Psoas muscle (tissue), 8 donors: ENCODE measurements at regions of chr3 and their contacts with region 1.

Region 1: DNA sequence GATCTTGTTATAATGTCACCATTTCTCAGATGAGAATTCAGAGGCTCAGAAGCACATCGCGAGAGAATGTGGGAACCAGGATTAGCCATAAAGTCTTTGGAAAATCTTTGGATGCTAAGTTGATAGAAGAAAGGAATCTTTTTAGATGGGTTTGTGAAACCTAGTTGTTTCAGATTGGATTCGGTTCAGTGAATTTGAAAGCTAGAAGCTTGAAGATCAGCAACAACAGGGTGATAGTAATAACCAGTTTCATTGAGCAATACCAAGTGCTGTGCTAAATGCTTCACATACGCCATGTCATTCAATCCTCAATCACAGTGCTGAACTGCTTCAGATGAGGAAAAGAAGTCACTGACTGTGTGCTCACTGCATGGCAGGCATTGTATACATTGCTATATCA is 47.4 kb upstream of the MITF start:
- DNase-seq: no peak
- ATAC-seq: peak; percentile 82 to 90 (median 86)
- H3K4me3 ChIP-seq: peak overlapping the region; percentile 55
- H3K27ac ChIP-seq: peak overlapping the region; percentile 66
- H3K4me1 ChIP-seq: peaks cover 26% of the 10 kb centered on the region
- H3K27me3 ChIP-seq: no peaks in the 10 kb centered on the region
- CTCF ChIP-seq: no peak

Region 2: DNA sequence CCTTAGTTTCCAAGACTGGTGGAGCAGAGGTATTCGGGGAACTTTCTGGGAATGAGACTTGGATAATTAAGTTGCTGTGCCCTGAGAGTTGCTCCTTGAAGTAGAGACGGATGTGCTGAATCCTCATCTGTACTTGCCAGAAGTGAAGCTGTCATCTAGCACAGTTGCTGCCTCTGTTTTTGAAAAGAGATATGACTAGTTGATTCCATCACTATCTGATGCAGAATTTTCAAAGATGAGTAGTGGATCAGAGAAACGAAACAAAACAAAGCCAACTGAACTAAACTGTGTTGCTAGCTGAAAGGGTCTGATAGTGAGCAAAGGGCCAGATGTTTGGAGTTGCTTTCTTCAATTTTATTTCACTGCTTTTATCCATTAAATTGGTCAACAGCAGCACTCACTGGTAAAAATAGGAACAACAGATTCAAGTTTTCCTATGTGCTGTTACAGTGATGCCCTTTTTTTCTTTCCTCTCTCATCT is 100.1 kb after region 1 on chr3:
- intact Hi-C with region 1: loop called (anchors 1 to 5 kb)
- DNase-seq: no peak
- ATAC-seq: peak; percentile 40 to 72 (median 64)
- H3K4me3 ChIP-seq: peak overlapping the region; percentile 25
- H3K27ac ChIP-seq: peak overlapping the region; percentile 67
- H3K4me1 ChIP-seq: peaks cover 52% of the 10 kb centered on the region
- H3K27me3 ChIP-seq: no peaks in the 10 kb centered on the region
- CTCF ChIP-seq: peak; percentile 54

Region 3: GRCh38 chr3:69855436-69856162 is 163.7 kb after region 1 on chr3:
- intact Hi-C with region 1: loop called (anchors 5 kb)
- DNase-seq: no peak
- ATAC-seq: peak; percentile 50 to 83 (median 68)
- H3K4me3 ChIP-seq: no peak overlapping the region
- H3K27ac ChIP-seq: peak overlapping the region; percentile 23
- H3K4me1 ChIP-seq: peaks cover 44% of the 10 kb centered on the region
- H3K27me3 ChIP-seq: no peaks in the 10 kb centered on the region
- CTCF ChIP-seq: peak; percentile 51

Region 4: GRCh38 chr3:69865920-69866679 is 174.2 kb after region 1 on chr3:
- intact Hi-C with region 1: loop called in 1 of 2 experiments (anchors 5 kb)
- DNase-seq: no peak
- ATAC-seq: peak; percentile 40 to 73 (median 57)
- H3K4me3 ChIP-seq: no peak overlapping the region
- H3K27ac ChIP-seq: peak overlapping the region; percentile 14
- H3K4me1 ChIP-seq: peaks cover 28% of the 10 kb centered on the region
- H3K27me3 ChIP-seq: no peaks in the 10 kb centered on the region
- CTCF ChIP-seq: no peak

Region 5: GRCh38 chr3:69948246-69948862 is 256.5 kb after region 1 on chr3:
- intact Hi-C with region 1: loop called (anchors 1 to 5 kb)
- DNase-seq: no peak
- ATAC-seq: peak in 1 of 4 donors; percentile 58
- H3K4me3 ChIP-seq: no peak overlapping the region
- H3K27ac ChIP-seq: no peak overlapping the region
- H3K4me1 ChIP-seq: no peaks in the 10 kb centered on the region
- H3K27me3 ChIP-seq: no peaks in the 10 kb centered on the region
- CTCF ChIP-seq: peak; percentile 61